WTC11 (cell line): ENCODE measurements at regions of chr20 and their contacts with region 1.

Region 1: DNA sequence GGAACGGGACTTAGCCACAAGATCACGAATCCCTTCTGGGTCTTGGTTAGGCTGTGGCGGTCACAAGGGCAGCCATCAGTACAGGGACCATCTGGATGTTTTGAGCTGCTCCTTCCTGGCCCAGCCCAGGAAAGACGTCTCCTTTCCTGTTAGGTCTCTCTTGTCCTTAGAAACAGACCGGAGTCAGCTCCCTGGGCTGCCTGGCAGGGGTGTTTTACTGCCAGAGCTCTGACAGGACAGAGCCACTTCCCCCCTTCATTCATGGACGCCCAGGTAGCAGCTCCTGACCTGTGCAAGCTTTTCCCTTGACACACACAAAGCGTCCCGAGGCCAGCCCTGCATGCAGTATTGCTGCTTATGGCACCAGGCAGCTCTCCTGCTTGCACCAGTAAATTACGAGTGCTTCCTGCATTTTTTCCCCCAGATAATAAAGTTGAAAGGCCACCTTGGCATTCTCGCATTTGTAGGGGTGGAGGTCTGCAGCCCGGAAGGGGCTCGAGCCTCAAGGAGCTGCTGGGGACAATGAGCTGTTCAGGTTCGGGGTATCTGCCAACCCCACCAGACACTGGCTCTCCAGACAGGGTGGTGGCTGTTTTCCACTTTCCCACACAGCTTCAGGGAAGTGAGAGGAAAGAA is 87.4 kb downstream of the NOL4L start:
- DNase-seq: no peak
- ATAC-seq: peak; percentile 67
- H3K4me3 Mint-ChIP-seq: no peak overlapping the region
- H3K27ac Mint-ChIP-seq: peak overlapping the region; percentile 30
- H3K4me1 Mint-ChIP-seq: peaks cover 13% of the 10 kb centered on the region
- H3K27me3 Mint-ChIP-seq: no peaks in the 10 kb centered on the region
- CTCF ChIP-seq: no peak

Region 2: DNA sequence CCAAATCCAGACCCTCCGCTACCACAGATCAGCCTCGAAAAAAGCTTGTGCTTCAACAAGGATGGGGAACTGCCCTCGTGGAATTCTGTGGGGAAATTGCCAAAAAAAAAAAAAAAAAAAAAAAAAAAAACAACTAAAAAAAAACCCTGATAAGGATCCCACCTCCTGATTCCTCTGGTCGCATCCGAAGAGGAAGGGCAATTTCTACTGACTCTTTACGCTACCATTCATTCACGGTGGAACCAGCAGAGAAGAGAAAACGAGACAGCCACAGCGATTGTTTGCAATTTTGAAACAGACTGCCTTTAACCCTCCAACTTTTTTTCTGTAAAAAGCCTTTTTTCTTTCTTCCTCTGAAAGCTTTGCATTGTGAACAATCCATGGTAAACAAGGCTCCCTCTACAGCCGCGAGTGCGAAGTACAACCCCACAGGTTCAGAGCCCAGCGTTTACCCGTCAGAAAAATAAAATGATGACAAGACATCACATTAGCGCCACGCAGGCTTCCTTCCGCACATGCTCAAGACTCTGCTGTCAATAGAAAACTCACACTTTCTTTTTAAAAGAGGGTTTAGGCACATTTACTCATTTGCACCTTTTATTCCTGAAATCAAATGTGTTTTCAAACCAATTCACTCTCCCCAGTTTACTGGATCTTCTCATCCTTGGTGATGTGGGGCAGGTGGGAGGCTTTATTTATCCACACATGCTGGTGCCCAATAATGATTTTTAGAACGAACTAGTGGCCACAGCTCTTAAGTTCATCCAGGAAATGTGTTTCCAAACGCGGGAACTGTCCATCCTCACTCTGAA is 12.5 kb before region 1 on chr20:
- CTCF ChIA-PET with region 1: interaction called, 28 read pairs
- POLR2A ChIA-PET with region 1: interaction called, 3 read pairs
- DNase-seq: peak; percentile 71
- ATAC-seq: peak; percentile 18
- H3K4me3 Mint-ChIP-seq: peak overlapping the region; percentile 88
- H3K27ac Mint-ChIP-seq: peak overlapping the region; percentile 94
- H3K4me1 Mint-ChIP-seq: peaks cover 28% of the 10 kb centered on the region
- H3K27me3 Mint-ChIP-seq: peaks cover 24% of the 10 kb centered on the region
- CTCF ChIP-seq: peak; percentile 71

Region 3: DNA sequence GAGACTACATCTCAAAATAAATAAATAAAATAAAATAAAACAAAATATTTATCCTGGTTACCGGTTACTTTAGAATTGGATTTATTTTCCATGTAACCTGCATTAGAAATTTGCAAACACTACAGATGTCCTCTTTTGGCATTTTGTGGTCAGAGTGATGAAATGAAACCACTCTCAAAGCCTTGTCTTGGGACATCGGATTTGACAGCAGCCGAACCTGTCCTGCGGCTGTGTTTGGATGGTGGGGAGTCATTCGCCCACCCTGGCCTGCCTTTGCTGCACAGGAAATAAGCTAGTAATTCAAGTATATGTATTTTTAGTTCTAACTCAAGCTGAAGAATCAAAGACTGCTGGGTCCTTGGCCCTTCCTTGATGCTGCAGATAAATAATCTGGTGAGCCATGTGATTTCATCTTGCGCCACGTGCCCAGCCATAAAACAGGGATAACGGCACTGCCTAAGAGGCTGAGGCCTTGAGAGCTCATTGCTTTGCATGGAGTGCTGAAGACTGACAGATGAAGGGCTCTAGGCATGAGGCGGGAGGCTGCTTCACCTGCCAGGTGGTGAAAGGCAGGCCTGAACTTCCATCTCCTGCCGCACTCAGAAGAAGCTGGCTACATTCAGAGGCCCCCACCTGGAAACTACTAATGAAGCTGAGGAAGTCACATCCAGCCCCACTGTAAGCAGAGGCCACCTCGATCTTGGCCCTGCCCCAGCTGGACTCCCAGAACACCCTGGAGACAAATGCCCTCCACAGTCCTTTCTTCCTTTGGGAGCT is 10.5 kb after region 1 on chr20:
- CTCF ChIA-PET with region 1: interaction called, 14 read pairs
- POLR2A ChIA-PET with region 1: no interaction called
- DNase-seq: no peak
- ATAC-seq: no peak
- H3K4me3 Mint-ChIP-seq: no peak overlapping the region
- H3K27ac Mint-ChIP-seq: no peak overlapping the region
- H3K4me1 Mint-ChIP-seq: peaks cover 45% of the 10 kb centered on the region
- H3K27me3 Mint-ChIP-seq: no peaks in the 10 kb centered on the region
- CTCF ChIP-seq: no peak